ENCODE measurements at regions of chr16 and their contacts with region 1.

Region 1: GRCh38 chr16:89350701-89351380 is 133.3 kb downstream of the ZNF778 start:
- DNase-seq: no peak
- ATAC-seq: no peak; the same call in 1 of the 2 replicates
- H3K4me3 ChIP-seq: no peak overlapping the region
- H3K27ac ChIP-seq: peak overlapping the region; percentile 51; the same call in 1 of the 2 replicates
- H3K4me1 ChIP-seq: peaks cover 49% of the 10 kb centered on the region
- H3K27me3 ChIP-seq: no peaks in the 10 kb centered on the region
- CTCF ChIP-seq: no peak

Region 2: DNA sequence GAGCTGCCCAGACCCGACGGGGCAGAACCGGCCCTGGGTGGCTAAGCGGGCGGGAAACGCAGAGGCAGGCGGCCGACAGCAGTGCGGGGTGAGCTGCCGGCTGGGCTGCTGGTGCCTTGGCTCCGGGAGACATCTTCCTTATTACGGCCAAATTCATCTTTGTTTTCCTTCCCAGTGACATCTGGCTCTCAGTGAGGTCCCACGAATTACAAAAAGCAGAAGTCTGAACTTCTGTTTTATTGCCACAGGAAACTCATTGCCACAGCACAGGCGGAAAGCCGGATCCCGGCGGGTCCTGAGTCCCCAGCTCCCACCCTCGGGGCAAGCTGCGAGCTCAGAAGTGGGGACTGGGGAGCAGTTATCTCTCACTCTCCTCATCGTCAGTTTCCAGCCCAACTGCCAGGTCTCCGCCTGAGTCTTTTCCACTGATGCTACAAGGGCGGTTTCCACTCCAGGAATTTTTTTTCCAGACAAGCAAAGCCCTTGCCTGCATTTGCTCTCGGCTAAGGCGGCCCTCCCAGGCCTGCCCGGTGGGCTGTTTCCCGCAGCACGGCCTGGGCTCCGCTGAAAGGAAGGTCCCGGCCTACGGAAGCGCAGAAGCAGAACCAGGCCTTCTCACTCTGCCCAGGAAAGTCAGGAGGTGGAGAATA is 414.2 kb before region 1 on chr16:
- CTCF ChIA-PET with region 1: no interaction called
- POLR2A ChIA-PET with region 1: no interaction called
- in situ Hi-C with region 1: no loop called
- intact Hi-C with region 1: no loop called
- DNase-seq: no peak
- ATAC-seq: no peak
- H3K4me3 ChIP-seq: no peak overlapping the region
- H3K27ac ChIP-seq: no peak overlapping the region; the same call in none of the 2 replicates
- H3K4me1 ChIP-seq: no peaks in the 10 kb centered on the region
- H3K27me3 ChIP-seq: no peaks in the 10 kb centered on the region
- CTCF ChIP-seq: no peak

Region 3: DNA sequence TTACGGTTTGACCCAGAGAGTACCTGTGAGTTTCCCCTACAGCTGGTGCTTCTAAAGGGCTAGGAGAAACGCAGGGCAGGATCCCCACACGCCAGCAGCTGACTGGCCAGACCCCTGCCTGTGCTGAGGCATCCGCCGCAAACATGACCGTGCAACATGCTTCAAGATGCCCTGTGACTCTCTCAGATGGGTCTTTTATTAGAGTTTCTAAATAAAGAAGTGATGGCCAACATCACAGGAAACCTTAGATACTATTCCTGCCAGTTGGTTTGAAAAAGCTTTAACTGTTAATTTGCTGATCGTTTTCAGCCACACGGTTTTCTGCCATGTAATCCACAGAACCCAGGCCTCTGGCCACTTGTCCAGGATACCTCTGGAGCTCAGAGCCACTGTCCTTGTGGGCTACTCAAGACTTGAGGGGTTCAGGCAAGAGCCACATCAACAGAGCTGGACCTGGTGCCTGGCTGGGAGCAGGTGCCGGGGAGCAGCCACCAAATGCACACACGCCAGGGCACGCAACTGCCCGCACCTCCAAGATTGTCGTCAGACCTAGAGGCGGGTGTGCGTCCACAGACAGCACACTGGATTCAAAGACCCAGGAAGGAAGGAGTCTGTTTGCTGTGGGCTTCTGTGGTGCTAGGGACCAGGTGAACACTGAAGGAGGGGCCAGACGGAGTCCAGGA is 14.9 kb before region 1 on chr16:
- CTCF ChIA-PET with region 1: no interaction called
- POLR2A ChIA-PET with region 1: interaction called, 12 read pairs
- in situ Hi-C with region 1: no loop called
- intact Hi-C with region 1: no loop called
- DNase-seq: no peak
- ATAC-seq: no peak; the same call in 1 of the 2 replicates
- H3K4me3 ChIP-seq: no peak overlapping the region
- H3K27ac ChIP-seq: peak overlapping the region; percentile 65
- H3K4me1 ChIP-seq: peaks cover 78% of the 10 kb centered on the region
- H3K27me3 ChIP-seq: no peaks in the 10 kb centered on the region
- CTCF ChIP-seq: no peak

Region 4: DNA sequence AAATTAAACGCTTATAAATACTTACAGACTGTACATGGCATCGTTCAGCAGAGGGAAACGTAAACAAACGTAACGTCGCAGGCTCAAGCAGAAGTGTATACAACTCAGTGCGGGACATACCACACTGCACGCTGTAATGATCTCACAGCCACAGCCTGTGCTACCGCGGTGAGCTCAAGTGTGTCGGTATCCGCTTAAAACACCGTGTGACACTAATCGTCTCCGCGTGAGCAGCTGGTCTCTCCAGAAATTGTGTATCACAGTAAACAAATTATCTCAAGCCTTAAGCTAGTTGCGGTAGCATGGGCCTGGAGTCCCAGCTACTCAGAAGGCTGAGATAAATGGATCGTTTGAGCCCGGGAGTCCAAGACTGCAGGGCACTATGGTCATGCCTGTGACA is 24.2 kb after region 1 on chr16:
- CTCF ChIA-PET with region 1: interaction called, 18 read pairs
- POLR2A ChIA-PET with region 1: no interaction called
- in situ Hi-C with region 1: no loop called
- intact Hi-C with region 1: no loop called
- DNase-seq: no peak
- ATAC-seq: peak; percentile 51
- H3K4me3 ChIP-seq: no peak overlapping the region
- H3K27ac ChIP-seq: no peak overlapping the region; the same call in 1 of the 2 replicates
- H3K4me1 ChIP-seq: peaks cover 66% of the 10 kb centered on the region
- H3K27me3 ChIP-seq: no peaks in the 10 kb centered on the region
- CTCF ChIP-seq: no peak

Measured in Panc1 (cell line).